Right ventricle myocardium superior (tissue), 1 donor: ENCODE measurements at regions of chr16 and their contacts with region 1.

Region 1: GRCh38 chr16:53266156-53266555 is 168.1 kb upstream of the RBL2 start:
- DNase-seq: no peak
- ATAC-seq: no peak

Region 2: DNA sequence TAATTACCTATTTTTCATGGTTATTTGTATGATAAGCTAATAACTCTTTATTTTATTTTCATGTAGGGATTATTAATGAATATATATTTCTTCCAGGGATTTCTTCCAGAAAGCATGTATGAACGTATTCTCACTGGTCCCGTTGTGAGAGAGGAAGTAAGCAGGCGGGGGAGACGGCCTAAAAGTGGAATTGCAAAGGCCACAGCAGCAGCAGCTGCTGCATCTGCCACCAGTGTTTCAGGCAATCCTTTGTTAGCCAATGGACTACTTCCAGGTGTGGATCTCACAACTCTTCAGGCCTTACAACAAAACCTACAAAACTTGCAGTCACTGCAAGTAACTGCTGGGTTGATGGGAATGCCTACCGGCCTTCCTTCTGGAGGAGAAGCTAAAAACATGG is 57.8 kb after region 1 on chr16:
- intact Hi-C with region 1: loop called (anchors 10 kb)
- DNase-seq: no peak
- ATAC-seq: no peak

Region 3: DNA sequence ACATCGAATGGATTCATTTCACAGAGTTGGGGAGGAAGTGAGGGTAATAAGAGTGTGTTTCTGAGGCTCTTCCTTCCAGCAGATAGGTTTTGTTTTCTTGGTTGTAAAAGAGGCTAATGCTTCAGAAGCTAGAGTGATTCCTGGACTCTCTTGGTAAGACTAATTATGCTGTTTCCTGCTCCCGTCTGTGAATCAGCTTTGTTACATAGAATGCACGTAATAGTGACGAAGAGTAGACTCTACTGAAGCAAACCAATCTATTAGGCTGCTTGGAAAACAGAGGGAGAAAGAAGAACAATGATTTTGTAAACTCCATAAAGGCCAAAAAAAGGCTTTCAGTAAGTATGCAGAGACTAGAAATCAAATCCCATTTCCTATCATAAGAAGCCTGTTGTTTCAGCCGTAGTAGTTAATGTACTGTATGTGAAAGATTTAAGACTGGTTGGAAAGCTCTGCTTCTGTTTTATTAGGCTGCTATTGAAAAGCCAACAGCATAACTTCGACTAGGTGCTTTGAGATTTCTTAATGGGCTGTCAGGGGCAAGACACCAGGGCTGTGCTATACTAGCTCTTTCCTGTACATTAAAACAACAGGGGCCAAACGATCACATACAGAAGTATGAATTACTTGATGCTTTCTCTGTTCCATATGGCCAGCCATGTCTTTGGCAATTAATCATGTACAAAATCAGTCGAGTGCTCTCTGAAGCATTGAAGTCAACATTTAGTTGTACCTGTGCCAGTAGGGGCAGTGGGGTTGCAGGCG is 656.8 kb after region 1 on chr16:
- intact Hi-C with region 1: no loop called
- DNase-seq: no peak
- ATAC-seq: no peak